ENCODE measurements at regions of chr2 and their contacts with region 1.

Region 1: GRCh38 chr2:223197046-223197445 is 145.1 kb downstream of the KCNE4 start:
- DNase-seq: no peak
- H3K4me3 ChIP-seq: no peak overlapping the region
- H3K27ac ChIP-seq: peak overlapping the region; percentile 15
- H3K4me1 ChIP-seq: peaks cover 48% of the 10 kb centered on the region
- H3K27me3 ChIP-seq: no peaks in the 10 kb centered on the region
- CTCF ChIP-seq: no peak

Region 2: GRCh38 chr2:222976521-222977076 is 220.4 kb before region 1 on chr2:
- CTCF ChIA-PET with region 1: interaction called, 8 read pairs
- POLR2A ChIA-PET with region 1: no interaction called
- intact Hi-C with region 1: loop called (anchors 2 kb)
- DNase-seq: peak; percentile 34
- H3K4me3 ChIP-seq: no peak overlapping the region
- H3K27ac ChIP-seq: no peak overlapping the region
- H3K4me1 ChIP-seq: peaks cover 29% of the 10 kb centered on the region
- H3K27me3 ChIP-seq: no peaks in the 10 kb centered on the region
- CTCF ChIP-seq: no peak

Region 3: GRCh38 chr2:223032187-223033142 is 164.6 kb before region 1 on chr2:
- CTCF ChIA-PET with region 1: no interaction called
- POLR2A ChIA-PET with region 1: no interaction called
- intact Hi-C with region 1: no loop called
- DNase-seq: no peak
- H3K4me3 ChIP-seq: no peak overlapping the region
- H3K27ac ChIP-seq: no peak overlapping the region
- H3K4me1 ChIP-seq: peaks cover 6% of the 10 kb centered on the region
- H3K27me3 ChIP-seq: no peaks in the 10 kb centered on the region
- CTCF ChIP-seq: no peak

Region 4: DNA sequence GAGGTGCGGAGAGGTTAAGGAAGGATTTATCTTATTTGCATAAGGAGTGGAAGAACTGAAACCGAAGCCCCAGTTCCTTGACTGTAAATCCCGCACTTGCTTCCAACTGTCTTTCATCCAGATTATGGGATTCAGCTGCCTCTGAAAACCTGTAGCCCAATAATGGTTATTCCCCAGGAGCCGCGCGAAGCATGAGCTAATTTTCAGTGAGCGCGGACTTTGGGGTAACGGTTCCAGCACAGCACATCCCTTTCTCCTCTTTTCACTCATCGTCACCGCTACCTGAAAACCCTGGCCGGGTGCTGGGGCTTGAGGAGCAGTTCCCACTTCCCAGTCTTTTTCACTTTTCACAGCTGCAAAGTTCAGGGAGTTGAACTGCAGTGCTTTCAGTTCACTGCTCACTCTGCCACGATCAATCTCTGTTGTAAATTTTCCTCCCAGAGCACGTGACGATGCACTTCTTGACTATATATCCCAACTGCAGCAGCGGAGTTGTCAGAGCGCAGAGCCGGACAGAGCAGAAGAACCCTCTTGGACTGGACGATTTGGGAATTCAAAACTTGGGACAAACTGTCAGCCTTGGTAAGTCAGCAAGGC is 145.3 kb before region 1 on chr2 and contains the start of gene KCNE4:
- CTCF ChIA-PET with region 1: no interaction called
- POLR2A ChIA-PET with region 1: no interaction called
- intact Hi-C with region 1: loop called (anchors 5 kb)
- DNase-seq: peak; percentile 91
- H3K4me3 ChIP-seq: peak within 1 kb of the TSS; percentile 69
- H3K27ac ChIP-seq: peak within 1 kb of the TSS; percentile 94
- H3K4me1 ChIP-seq: peaks cover 60% of the 10 kb centered on the region
- H3K27me3 ChIP-seq: no peaks in the 10 kb centered on the region
- CTCF ChIP-seq: no peak
- total RNA-seq, gene KCNE4: 68.0 and 82.5 TPM in 2 replicates

Region 5: DNA sequence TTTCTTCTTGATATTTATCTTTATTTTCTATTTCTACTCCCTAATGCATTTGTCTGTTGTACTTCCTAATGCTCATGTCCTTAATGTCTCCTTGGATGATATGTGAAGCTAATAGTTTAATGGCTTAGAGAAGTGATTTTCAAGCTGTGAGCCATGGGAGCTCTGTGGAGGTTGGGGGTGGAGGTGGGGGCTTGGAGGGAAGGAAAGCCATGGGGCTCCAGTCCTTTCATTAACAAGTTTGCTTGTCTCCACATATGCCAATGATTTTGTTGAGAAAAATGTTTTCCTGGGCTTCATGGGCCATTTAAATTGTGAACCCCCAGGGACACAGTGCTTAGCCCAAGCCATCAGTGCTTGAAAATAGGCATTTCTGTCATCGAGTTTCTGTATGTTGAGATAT is 141.0 kb after region 1 on chr2:
- CTCF ChIA-PET with region 1: no interaction called
- POLR2A ChIA-PET with region 1: interaction called, 11 read pairs
- intact Hi-C with region 1: no loop called
- DNase-seq: peak; percentile 87
- H3K4me3 ChIP-seq: no peak overlapping the region
- H3K27ac ChIP-seq: no peak overlapping the region
- H3K4me1 ChIP-seq: peaks cover 8% of the 10 kb centered on the region
- H3K27me3 ChIP-seq: no peaks in the 10 kb centered on the region
- CTCF ChIP-seq: no peak

Measured in A673 (cell line).